Esophagus squamous epithelium (tissue), 5 donors: ENCODE measurements at regions of chr20 and their contacts with region 1.

Region 1: GRCh38 chr20:58870239-58871014 is 17.9 kb downstream of the GNAS start:
- DNase-seq: no peak
- H3K4me3 ChIP-seq: no peak overlapping the region
- H3K27ac ChIP-seq: no peak overlapping the region
- H3K4me1 ChIP-seq: peaks cover 0 to 7% (median 0%) of the 10 kb centered on the region in 3 donors
- H3K27me3 ChIP-seq: no peaks in the 10 kb centered on the region
- CTCF ChIP-seq: peak; percentile 81 to 85 (median 84)
- POLR2A ChIP-seq: no peak

Region 2: DNA sequence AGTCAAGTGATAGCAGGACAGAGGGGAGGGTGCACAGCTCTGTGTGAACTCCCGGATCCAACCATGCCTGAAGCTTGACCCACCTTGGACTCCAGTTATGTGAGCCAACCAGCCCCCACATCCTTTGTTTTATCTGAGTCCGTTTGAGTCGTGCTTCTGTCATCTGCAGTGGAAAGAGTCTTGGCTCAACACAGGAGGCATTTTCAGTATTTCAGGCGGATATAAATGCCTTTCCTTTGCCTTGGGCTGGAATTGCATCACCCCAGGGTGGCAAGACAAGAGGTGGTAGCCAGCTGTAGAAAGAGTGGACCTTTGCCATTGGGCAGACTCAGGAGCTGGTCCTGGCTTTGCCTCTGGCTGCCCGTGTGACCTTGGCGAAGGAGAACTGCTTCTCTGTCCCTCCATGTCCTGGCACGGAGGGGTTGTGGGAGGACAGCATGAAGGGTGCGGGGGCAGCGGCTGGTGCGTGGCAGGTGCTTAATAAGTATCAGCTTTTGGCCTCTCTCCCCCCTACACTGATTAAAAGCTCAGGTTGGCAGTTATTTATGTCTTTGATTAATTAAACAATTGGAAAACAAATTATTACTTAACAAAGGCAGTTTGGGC is 312.6 kb before region 1 on chr20:
- intact Hi-C with region 1: no loop called
- DNase-seq: no peak
- H3K4me3 ChIP-seq: no peak overlapping the region
- H3K27ac ChIP-seq: no peak overlapping the region
- H3K4me1 ChIP-seq: no peaks in the 10 kb centered on the region
- H3K27me3 ChIP-seq: peaks cover 0 to 26% (median 0%) of the 10 kb centered on the region in 4 donors
- CTCF ChIP-seq: no peak
- POLR2A ChIP-seq: no peak

Region 3: GRCh38 chr20:58682662-58683531 is 187.5 kb before region 1 on chr20:
- intact Hi-C with region 1: no loop called
- DNase-seq: no peak
- H3K4me3 ChIP-seq: no peak overlapping the region
- H3K27ac ChIP-seq: no peak overlapping the region
- H3K4me1 ChIP-seq: no peaks in the 10 kb centered on the region
- H3K27me3 ChIP-seq: no peaks in the 10 kb centered on the region
- CTCF ChIP-seq: no peak
- POLR2A ChIP-seq: no peak

Region 4: DNA sequence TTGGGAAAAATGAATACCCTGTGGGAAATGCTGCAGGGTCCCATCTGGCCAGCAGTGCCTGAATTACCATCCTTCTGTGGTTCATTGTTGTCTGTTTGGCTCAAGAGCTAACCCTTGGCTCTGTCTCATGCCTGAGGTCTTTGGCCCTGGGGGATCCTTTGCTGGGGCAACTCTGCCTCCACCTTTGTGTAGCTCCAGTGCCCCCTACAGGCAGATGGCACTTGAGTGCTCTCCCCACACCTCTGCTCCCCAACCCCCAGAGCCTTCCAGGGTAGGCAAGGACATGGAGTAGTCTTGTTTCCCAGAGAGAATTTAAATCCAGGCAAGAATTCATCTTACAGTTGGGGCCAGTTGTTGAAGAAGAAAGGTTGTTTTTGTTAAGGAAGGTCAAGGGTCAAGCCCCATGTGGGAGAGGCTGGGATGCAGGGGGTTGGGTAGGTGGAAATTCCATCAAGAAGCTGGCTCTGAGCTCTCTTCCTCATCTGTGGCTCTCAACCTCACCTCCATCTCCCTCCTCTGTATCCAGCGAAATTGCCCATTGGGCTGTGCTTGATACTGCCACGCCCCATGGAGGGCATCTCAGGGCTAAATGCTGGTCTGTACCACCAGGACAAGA is 337.4 kb after region 1 on chr20:
- intact Hi-C with region 1: loop called (anchors 10 kb)
- DNase-seq: no peak
- H3K4me3 ChIP-seq: no peak overlapping the region
- H3K27ac ChIP-seq: no peak overlapping the region
- H3K4me1 ChIP-seq: peaks cover 0 to 10% (median 0%) of the 10 kb centered on the region in 3 donors
- H3K27me3 ChIP-seq: peaks cover 0 to 41% (median 0%) of the 10 kb centered on the region in 4 donors
- CTCF ChIP-seq: peak; percentile 41 to 69 (median 54)
- POLR2A ChIP-seq: no peak

Region 5: GRCh38 chr20:59235226-59235625 is 364.8 kb after region 1 on chr20:
- intact Hi-C with region 1: no loop called
- DNase-seq: no peak
- H3K4me3 ChIP-seq: no peak overlapping the region
- H3K27ac ChIP-seq: no peak overlapping the region
- H3K4me1 ChIP-seq: no peaks in the 10 kb centered on the region
- H3K27me3 ChIP-seq: peaks cover 0 to 19% (median 0%) of the 10 kb centered on the region in 4 donors
- CTCF ChIP-seq: no peak
- POLR2A ChIP-seq: no peak

Region 6: DNA sequence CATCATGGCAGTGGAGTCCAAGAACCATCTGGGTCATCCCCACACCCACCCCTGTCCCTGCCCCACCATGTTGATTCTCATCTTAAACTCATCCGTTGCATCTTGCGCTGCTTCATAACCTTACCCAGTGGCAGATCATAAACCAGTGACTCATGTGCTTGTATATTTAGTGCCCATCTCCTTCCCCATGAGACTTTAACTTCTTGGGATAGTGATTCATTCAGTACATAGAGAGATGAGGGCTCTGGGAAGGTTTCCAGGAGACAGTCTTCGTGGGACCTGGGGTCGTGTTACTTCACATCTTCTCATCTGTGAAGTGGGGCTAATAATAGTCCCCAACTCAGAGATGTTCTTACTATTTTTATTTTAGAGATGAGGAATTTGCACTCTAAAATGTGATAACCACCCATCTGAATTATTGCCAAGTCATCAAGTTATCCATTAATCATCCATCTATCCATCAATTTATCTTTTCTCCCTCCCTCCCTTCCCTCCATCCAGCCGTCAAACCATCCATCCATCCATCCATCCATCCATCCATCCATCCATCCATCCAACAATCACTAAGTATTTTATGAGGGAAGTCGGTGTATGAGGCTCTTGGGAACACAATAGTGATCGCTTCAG is 481.1 kb after region 1 on chr20:
- intact Hi-C with region 1: no loop called
- DNase-seq: no peak
- H3K4me3 ChIP-seq: no peak overlapping the region
- H3K27ac ChIP-seq: no peak overlapping the region
- H3K4me1 ChIP-seq: peaks cover 0 to 5% (median 0%) of the 10 kb centered on the region in 3 donors
- H3K27me3 ChIP-seq: peaks cover 0 to 15% (median 0%) of the 10 kb centered on the region in 4 donors
- CTCF ChIP-seq: no peak
- POLR2A ChIP-seq: no peak